KBM-7 (cell line): ENCODE measurements at regions of chr4 and their contacts with region 1.

Region 1: DNA sequence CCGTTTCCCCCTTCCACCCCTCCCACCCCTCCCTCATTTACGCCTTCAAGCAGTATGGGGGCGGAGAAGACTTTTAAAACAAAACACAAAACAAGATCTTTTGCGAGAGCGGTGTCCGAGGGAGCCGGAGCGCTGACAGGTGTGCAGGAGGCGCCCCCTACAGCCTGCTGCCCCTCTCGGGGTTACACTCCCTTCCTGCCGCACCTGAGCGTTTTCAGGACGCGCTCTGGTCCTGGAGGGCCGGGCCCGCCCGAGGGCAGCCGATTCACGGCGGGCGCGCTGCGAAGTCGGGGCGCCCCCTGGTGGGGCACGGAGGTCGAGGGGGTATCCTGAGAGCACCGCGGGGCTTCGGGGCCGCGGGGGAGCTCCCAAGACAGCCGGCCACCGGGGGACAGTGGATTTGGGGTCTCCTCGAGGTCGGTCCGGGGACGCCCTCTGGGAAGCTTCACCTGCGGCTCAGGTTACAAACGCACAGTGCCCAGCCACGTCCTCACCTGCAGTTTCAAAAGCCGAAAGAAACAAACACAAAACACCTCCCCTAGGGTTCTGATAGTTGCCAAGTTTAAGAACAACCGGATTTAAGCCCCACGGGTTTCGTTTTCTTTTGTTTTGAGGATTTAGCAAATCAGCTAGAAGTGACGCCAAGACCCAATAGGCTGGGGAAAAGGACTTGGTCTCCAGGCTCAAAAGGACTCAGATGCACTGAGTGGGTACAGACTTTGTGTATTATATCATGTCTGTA is 8.0 kb upstream of the NEUROG2 start:
- DNase-seq: peak; percentile 81

Region 2: DNA sequence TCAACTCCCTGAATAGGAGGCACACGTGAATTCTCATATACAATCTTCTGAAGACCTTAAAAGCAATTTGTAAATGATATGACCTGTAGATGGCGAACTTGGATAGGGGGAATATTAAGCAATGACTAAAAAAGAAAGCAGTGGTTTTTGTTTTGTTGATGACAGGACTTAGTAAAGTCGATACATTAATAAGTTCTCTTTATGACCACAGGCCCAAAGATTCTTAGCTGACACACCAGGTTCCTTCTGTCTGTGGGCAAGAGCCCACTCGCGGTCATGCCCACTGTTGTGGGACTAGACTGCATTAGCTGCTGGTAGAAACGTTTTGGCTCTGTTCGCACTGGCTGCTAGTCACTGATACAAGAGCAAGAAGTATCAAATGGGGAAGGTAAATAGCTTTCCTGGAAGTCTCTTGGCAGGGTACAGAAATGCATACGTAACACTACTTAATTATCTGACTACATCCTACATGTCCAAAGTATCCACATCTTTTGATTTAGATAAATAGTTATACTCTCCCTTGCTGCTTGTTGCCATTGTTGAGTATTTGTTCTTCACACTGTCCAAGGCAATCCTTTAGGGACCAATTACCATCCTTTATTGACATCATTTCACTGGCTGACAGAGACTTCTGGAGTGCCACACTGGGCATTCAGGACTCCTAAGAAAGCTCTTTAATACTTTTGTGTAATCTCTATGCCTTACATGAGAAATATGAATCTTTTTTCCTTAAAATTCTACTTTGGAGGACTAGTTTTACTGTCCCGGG is 195.8 kb before region 1 on chr4:
- in situ Hi-C with region 1: loop called (anchors 25 kb)
- DNase-seq: peak; percentile 70